ENCODE measurements at regions of chr7 and their contacts with region 1.

Region 1: GRCh38 chr7:33716581-33717477 is 188.5 kb upstream of the BMPER start:
- DNase-seq: no peak
- ATAC-seq: no peak
- H3K4me3 ChIP-seq: no peak overlapping the region
- H3K27ac ChIP-seq: no peak overlapping the region
- H3K4me1 ChIP-seq: peaks cover 0 to 16% (median 10%) of the 10 kb centered on the region in 9 donors
- H3K27me3 ChIP-seq: peaks cover 0 to 3% (median 0%) of the 10 kb centered on the region in 7 donors
- CTCF ChIP-seq: peak; percentile 45 to 78 (median 66)

Region 2: DNA sequence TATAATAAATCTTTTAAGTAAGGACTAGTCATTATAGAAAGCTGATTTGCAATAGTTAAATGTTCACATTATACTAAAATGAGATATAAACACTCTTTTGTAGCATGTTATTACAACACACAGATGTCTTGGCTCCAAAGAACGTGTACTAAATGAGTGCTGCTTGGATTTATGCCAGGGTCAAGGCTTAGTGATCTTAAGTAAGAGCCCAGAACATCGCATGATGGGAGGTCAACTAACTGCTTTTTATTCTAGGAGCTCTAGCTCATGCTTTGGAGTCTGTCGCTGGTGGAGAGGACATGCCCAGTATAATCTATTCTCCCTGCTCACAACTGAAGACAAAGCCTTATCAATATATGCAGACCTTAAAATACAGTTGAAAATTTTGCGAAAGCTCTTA is 272.3 kb before region 1 on chr7:
- intact Hi-C with region 1: loop called in 1 of 10 experiments (anchors 10 kb)
- DNase-seq: peak in 1 of 2 donors; percentile 59
- ATAC-seq: peak in 6 of 8 donors; percentile 47 to 79 (median 56)
- H3K4me3 ChIP-seq: no peak overlapping the region
- H3K27ac ChIP-seq: no peak overlapping the region
- H3K4me1 ChIP-seq: peaks cover 0 to 18% (median 5%) of the 10 kb centered on the region in 9 donors
- H3K27me3 ChIP-seq: no peaks in the 10 kb centered on the region
- CTCF ChIP-seq: no peak

Region 3: GRCh38 chr7:33692956-33693355 is 23.9 kb before region 1 on chr7:
- intact Hi-C with region 1: no loop called
- DNase-seq: no peak
- ATAC-seq: no peak
- H3K4me3 ChIP-seq: no peak overlapping the region
- H3K27ac ChIP-seq: no peak overlapping the region
- H3K4me1 ChIP-seq: no peaks in the 10 kb centered on the region
- H3K27me3 ChIP-seq: no peaks in the 10 kb centered on the region
- CTCF ChIP-seq: no peak

Measured in heart right ventricle (tissue), 16 donors.